ENCODE measurements at regions of chr12 and their contacts with region 1.

Region 1: DNA sequence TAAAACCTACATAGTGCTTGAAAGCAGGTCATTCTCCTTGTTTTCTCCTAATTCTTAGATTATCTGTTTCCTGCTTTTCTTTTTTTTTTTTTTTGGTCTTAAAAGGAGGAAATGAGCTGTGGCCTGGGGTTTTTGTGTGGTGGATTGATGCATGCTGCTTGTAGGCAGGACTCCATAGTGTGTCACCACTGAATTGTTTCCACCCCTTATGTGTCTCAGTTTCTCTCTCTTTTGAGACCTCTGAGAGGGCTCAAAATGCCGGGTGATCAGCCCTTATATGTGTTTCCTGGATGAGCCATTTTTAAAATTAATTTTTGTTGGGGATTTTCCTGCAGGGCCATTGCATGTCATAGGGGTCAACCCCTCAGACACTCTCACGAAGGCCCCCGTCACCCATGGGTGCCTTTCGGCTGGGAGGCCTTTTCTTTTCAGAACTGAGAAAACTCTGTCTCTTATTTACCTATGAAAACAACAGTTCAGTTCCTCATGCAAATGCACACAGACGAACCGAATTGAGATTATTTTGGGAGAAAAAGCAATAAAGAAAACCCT is 32.0 kb upstream of the LRRK2 start:
- DNase-seq: peak; percentile 81
- ATAC-seq: peak; percentile 92
- H3K4me3 ChIP-seq: peak overlapping the region in 3 of 5 experiments; percentile 0 to 53 (median 22)
- H3K4me3 Mint-ChIP-seq: peak overlapping the region; percentile 78
- H3K27ac ChIP-seq: peak overlapping the region; percentile 71 to 88
- H3K27ac Mint-ChIP-seq: peak overlapping the region; percentile 93
- H3K4me1 ChIP-seq: peaks cover 31 to 32% of the 10 kb centered on the region in 2 donors
- H3K4me1 Mint-ChIP-seq: peaks cover 43% of the 10 kb centered on the region
- H3K27me3 ChIP-seq: no peaks in the 10 kb centered on the region
- H3K27me3 Mint-ChIP-seq: no peaks in the 10 kb centered on the region
- CTCF ChIP-seq: no peak

Region 2: GRCh38 chr12:40123486-40123885 is 69.3 kb before region 1 on chr12:
- CTCF ChIA-PET with region 1: no interaction called
- POLR2A ChIA-PET with region 1: no interaction called
- intact Hi-C with region 1: no loop called
- DNase-seq: no peak
- ATAC-seq: no peak
- H3K4me3 ChIP-seq: no peak overlapping the region
- H3K4me3 Mint-ChIP-seq: no peak overlapping the region
- H3K27ac ChIP-seq: no peak overlapping the region
- H3K27ac Mint-ChIP-seq: no peak overlapping the region
- H3K4me1 ChIP-seq: no peaks in the 10 kb centered on the region
- H3K4me1 Mint-ChIP-seq: no peaks in the 10 kb centered on the region
- H3K27me3 ChIP-seq: no peaks in the 10 kb centered on the region
- H3K27me3 Mint-ChIP-seq: no peaks in the 10 kb centered on the region
- CTCF ChIP-seq: no peak

Region 3: GRCh38 chr12:40158592-40159111 is 34.1 kb before region 1 on chr12:
- CTCF ChIA-PET with region 1: interaction called, 11 read pairs
- POLR2A ChIA-PET with region 1: interaction called, 4 read pairs
- intact Hi-C with region 1: loop called (anchors 2 kb)
- DNase-seq: peak; percentile 45
- ATAC-seq: peak; percentile 53
- H3K4me3 ChIP-seq: peak overlapping the region in 1 of 5 experiments; percentile 32
- H3K4me3 Mint-ChIP-seq: peak overlapping the region; percentile 18
- H3K27ac ChIP-seq: peak overlapping the region in 1 of 2 donors; percentile 0
- H3K27ac Mint-ChIP-seq: peak overlapping the region; percentile 13
- H3K4me1 ChIP-seq: peaks cover 27 to 32% of the 10 kb centered on the region in 2 donors
- H3K4me1 Mint-ChIP-seq: peaks cover 49% of the 10 kb centered on the region
- H3K27me3 ChIP-seq: no peaks in the 10 kb centered on the region
- H3K27me3 Mint-ChIP-seq: no peaks in the 10 kb centered on the region
- CTCF ChIP-seq: no peak

Region 4: GRCh38 chr12:40168868-40169267 is 23.9 kb before region 1 on chr12:
- CTCF ChIA-PET with region 1: no interaction called
- POLR2A ChIA-PET with region 1: no interaction called
- intact Hi-C with region 1: loop called (anchors 1 kb)
- DNase-seq: peak; percentile 51
- ATAC-seq: peak; percentile 67
- H3K4me3 ChIP-seq: peak overlapping the region in 3 of 5 experiments; percentile 8 to 31 (median 22)
- H3K4me3 Mint-ChIP-seq: peak overlapping the region; percentile 80
- H3K27ac ChIP-seq: no peak overlapping the region
- H3K27ac Mint-ChIP-seq: peak overlapping the region; percentile 68
- H3K4me1 ChIP-seq: peaks cover 11% of the 10 kb centered on the region in 2 donors
- H3K4me1 Mint-ChIP-seq: peaks cover 26% of the 10 kb centered on the region
- H3K27me3 ChIP-seq: no peaks in the 10 kb centered on the region
- H3K27me3 Mint-ChIP-seq: no peaks in the 10 kb centered on the region
- CTCF ChIP-seq: no peak

Region 5: DNA sequence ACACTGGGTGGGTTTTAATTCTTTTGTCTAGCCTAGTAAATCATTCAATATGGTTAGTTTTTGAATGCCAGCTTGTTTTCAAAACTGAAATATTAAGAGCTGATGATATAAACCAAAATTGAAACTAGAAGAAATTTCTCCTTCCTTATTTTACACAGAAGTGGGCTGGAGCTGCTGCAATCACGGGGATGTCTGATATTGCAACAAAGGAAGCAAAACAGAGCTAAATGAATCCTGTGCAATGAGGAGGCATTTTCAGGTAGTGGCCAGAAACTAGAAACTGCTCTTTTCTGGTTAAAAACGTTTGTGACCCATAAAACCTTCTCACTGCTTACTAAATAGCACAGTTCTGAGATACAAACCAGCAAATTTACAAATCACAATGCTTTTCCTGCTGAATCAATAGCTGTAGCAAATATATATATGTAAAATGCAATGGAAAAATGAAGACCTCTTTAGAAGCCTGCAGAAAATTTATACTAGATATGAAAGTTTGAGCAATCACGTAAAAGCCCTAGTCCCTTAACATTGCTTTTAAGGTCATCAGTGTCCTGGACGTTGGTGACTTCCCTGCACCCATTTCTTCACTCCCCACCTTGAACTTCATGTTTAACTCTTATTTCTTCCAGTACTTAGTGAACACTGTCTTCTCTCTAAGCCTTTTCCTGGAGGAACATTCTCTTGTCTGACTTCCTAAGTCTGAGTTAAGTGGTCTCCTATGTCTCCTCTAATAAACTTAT is 16.1 kb after region 1 on chr12:
- CTCF ChIA-PET with region 1: interaction called, 8 read pairs
- POLR2A ChIA-PET with region 1: no interaction called
- intact Hi-C with region 1: loop called (anchors 2 kb)
- DNase-seq: peak; percentile 72
- ATAC-seq: peak; percentile 88
- H3K4me3 ChIP-seq: peak overlapping the region in 3 of 5 experiments; percentile 5 to 48 (median 36)
- H3K4me3 Mint-ChIP-seq: peak overlapping the region; percentile 65
- H3K27ac ChIP-seq: peak overlapping the region; percentile 64 to 84
- H3K27ac Mint-ChIP-seq: peak overlapping the region; percentile 88
- H3K4me1 ChIP-seq: peaks cover 27 to 29% of the 10 kb centered on the region in 2 donors
- H3K4me1 Mint-ChIP-seq: peaks cover 26% of the 10 kb centered on the region
- H3K27me3 ChIP-seq: no peaks in the 10 kb centered on the region
- H3K27me3 Mint-ChIP-seq: no peaks in the 10 kb centered on the region
- CTCF ChIP-seq: no peak

Region 6: GRCh38 chr12:40261937-40262336 is 69.2 kb after region 1 on chr12:
- CTCF ChIA-PET with region 1: no interaction called
- POLR2A ChIA-PET with region 1: no interaction called
- intact Hi-C with region 1: loop called (anchors 2 kb)
- DNase-seq: peak; percentile 56
- ATAC-seq: peak; percentile 78
- H3K4me3 ChIP-seq: no peak overlapping the region
- H3K4me3 Mint-ChIP-seq: peak overlapping the region; percentile 44
- H3K27ac ChIP-seq: peak overlapping the region in 1 of 2 donors; percentile 32
- H3K27ac Mint-ChIP-seq: peak overlapping the region; percentile 0
- H3K4me1 ChIP-seq: peaks cover 20 to 32% of the 10 kb centered on the region in 2 donors
- H3K4me1 Mint-ChIP-seq: peaks cover 30% of the 10 kb centered on the region
- H3K27me3 ChIP-seq: no peaks in the 10 kb centered on the region
- H3K27me3 Mint-ChIP-seq: no peaks in the 10 kb centered on the region
- CTCF ChIP-seq: no peak